ENCODE measurements at regions of chr9 and their contacts with region 1.

Region 1: DNA sequence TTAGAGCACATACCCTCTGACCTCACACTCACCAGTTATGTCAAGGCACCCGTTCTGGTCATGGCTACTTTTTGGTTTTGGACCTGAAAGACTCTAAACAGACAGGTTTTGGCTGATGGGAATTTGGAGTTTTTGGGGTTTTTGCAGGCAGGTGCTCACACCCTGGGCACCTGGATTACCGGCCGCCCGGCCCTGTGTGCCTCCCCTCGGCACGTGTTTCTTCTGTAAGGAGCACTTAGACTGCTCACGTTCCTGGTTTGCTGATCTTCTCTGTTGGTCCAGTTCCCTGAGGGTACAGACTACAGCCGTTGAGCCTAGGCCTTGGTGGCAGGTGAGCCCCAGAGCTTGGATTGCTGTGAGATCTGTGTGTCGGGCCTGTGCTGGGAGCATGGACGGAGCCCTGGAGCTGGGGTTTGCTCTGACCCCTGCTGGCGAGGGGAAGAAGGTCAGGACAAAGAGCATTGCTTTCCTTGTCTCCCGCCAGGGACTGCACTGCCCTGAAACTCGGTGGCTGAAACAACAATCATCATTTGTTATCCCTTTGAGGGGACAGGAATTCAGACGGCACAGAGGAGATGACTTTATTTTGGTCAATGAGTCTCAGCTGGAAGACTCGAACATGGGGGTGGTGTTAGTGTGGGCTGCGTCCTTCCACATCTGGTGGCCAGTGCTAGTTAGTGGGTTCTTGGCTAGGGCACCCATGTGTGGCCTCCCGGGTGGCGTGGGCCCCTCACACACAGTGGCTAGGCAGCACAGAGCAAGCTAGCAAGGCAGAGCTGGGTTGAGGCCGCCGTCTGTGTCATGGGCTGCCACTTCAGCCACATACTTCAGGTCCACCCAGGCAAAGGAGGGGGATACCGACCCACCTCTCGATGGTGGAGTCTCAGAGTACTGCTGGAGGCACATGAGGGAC is 76.4 kb downstream of the EHMT1 start:
- DNase-seq: peak; percentile 54 to 86
- H3K4me3 ChIP-seq: no peak overlapping the region
- H3K27ac ChIP-seq: peak overlapping the region; percentile 56; the same call in 1 of the 2 replicates
- H3K4me1 ChIP-seq: peaks cover 8 to 33% (median 17%) of the 10 kb centered on the region in 4 experiments; a peak in 6 of 7 replicates
- H3K27me3 ChIP-seq: no peaks in the 10 kb centered on the region
- CTCF ChIP-seq: peak; percentile 92 to 97 (median 95)
- EP300 ChIP-seq: no peak
- POLR2A ChIP-seq: no peak
- RAD21 ChIP-seq: peak; percentile 78 to 81

Region 2: DNA sequence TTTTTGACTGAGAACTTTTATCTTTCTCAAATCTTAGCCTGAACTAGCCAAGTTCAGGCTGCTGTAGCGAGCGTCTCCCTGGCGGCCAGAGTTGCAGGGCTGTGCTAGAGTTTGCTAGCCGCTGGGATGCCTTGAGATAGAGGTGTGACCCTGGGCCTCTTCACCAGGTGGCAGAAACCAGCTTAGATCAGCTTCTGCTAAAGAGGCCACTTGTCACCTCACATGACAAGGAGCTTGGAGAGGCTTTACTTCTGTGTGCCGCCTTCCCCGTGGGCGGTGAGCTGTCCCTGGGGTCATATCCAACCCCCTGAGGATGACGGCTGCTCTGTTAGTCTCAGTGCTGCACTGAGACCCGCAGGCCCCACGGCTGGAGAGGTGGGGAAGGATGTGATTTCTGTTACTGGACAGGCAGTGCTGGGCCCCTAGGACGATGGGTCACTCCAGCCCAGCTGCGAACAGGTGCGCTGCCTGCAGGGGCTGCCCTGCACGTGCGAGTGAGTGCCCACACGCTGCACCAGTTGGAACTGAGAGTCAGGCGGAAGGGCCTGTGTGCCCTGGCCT is 12.7 kb before region 1 on chr9:
- CTCF ChIA-PET with region 1: interaction called, 28 read pairs
- POLR2A ChIA-PET with region 1: interaction called, 9 read pairs
- DNase-seq: no peak
- H3K4me3 ChIP-seq: no peak overlapping the region
- H3K27ac ChIP-seq: no peak overlapping the region
- H3K4me1 ChIP-seq: peaks cover 18 to 41% (median 32%) of the 10 kb centered on the region in 4 experiments
- H3K27me3 ChIP-seq: no peaks in the 10 kb centered on the region
- CTCF ChIP-seq: peak in 1 of 3 experiments; percentile 41; a peak in 1 of 4 replicates
- EP300 ChIP-seq: no peak
- POLR2A ChIP-seq: no peak
- RAD21 ChIP-seq: peak; percentile 16 to 35; a peak in 2 of 4 replicates

Region 3: GRCh38 chr9:137710704-137711103 is 15.5 kb after region 1 on chr9:
- CTCF ChIA-PET with region 1: interaction called, 12 read pairs
- POLR2A ChIA-PET with region 1: interaction called, 3 read pairs
- DNase-seq: no peak
- H3K4me3 ChIP-seq: no peak overlapping the region
- H3K27ac ChIP-seq: no peak overlapping the region
- H3K4me1 ChIP-seq: peaks cover 0 to 16% (median 3%) of the 10 kb centered on the region in 4 experiments; a peak in 5 of 7 replicates
- H3K27me3 ChIP-seq: no peaks in the 10 kb centered on the region
- CTCF ChIP-seq: no peak
- EP300 ChIP-seq: no peak
- POLR2A ChIP-seq: no peak
- RAD21 ChIP-seq: no peak

Region 4: DNA sequence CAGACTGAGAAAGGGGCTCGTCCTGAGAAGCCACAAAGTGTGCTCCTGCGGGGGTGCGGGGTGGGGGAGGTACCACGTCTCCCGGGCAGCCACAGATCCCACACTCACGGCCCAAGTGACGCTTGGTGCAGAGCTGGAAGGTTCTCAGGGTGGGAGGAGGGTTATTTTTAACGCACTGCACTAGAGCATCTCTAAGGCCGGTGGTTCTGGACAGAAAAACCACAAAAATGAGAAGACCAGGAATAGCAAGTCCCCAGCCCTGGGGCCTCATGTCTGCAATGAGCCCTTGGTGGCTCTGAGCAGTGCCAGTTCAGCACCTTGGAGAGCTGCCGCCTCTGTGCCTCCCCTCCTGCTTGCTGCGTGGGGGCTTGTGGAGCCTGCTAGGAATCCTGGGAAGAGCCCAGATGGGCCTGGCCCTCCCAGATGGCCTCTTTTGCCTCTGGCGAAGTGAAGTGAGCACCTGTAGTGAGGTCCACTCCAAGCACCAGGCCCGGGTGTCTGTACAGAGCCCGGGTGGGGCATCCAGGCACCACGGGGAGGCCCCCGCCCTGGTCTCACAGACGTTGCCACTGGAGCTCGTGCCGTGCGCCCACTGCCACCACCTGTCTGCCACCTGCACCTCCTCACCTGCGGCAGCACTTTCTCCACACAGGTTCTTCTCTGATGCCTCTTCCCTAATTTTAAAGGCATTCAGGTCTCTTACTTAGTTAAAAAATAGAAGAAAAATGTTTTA is 133.5 kb after region 1 on chr9:
- CTCF ChIA-PET with region 1: no interaction called
- POLR2A ChIA-PET with region 1: no interaction called
- DNase-seq: peak in 1 of 2 experiments; percentile 81
- H3K4me3 ChIP-seq: no peak overlapping the region
- H3K27ac ChIP-seq: no peak overlapping the region
- H3K4me1 ChIP-seq: no peaks in the 10 kb centered on the region
- H3K27me3 ChIP-seq: no peaks in the 10 kb centered on the region
- CTCF ChIP-seq: no peak
- EP300 ChIP-seq: no peak
- POLR2A ChIP-seq: no peak
- RAD21 ChIP-seq: no peak